ENCODE measurements at regions of chr18 and their contacts with region 1.

Region 1: DNA sequence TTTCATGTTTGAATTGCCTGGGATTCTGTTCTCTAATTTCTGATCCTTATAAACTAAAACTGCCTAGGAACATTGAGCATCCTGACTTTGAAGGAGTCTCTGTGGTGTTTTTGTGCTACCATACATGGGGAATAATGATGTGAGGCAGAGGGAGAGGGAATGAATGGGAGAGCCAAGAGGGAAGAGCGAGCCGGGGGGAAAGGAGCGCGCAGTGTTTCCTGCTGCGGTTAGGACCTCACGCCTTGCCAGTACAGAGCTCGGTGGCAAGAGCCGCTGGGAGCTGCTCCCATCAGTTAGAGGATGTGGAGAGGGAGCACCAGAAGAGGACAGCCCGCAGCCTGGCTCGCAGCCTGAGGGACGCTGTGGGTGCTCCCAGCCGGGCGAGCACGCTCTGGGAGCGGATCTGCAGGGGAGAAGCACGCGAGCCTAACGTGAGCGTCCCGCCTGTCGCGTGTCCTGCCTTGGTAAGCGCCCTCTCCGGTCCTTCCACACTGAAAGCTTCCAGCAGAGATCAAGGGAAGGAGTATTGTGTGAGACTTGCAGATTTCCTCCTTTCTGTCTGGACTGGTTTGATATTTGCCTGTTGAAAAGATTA is 114.7 kb downstream of the FAM210A start:
- DNase-seq: peak; percentile 46
- ATAC-seq: no peak
- H3K4me3 Mint-ChIP-seq: peak overlapping the region; percentile 95
- H3K27ac Mint-ChIP-seq: peak overlapping the region; percentile 99
- H3K4me1 Mint-ChIP-seq: peaks cover 89% of the 10 kb centered on the region
- H3K27me3 Mint-ChIP-seq: no peaks in the 10 kb centered on the region
- CTCF ChIP-seq: no peak

Region 2: DNA sequence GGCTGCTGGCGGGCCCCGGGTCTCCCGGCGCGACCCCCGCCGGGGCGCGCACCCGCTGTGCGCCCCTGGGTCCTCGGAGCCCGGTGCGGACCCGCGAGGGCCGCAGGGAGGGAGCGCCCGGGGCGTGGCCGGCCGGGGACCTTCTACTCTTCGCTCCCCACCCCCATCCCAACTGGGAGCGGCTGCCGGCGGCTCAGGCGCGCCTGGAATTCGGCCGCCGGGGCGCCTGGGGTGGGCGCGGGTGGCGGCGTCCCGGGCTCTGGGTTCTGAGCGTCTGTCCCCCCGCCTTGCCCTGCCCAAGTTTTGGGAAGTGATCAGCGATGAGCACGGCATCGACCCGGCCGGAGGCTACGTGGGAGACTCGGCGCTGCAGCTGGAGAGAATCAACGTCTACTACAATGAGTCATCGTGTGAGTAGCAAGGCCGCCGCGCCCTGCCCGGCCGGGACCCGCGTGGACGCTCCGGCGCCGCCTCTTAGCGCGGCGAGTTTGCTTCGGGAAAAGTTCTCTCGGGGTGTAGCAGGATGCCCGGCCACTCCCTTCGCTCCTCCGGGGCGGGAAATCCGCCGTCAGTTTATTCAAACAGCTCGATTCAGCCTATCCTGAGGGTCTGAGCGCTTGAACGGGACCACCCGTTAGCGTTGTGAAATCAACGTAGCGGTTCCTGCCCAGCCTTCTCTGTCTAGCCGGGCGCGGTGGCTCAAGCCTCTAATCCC is 1303.2 kb before region 1 on chr18:
- CTCF ChIA-PET with region 1: no interaction called
- POLR2A ChIA-PET with region 1: no interaction called
- intact Hi-C with region 1: loop called (anchors 5 kb)
- DNase-seq: peak; percentile 57
- ATAC-seq: peak; percentile 63
- H3K4me3 Mint-ChIP-seq: peak overlapping the region; percentile 85
- H3K27ac Mint-ChIP-seq: peak overlapping the region; percentile 69
- H3K4me1 Mint-ChIP-seq: peaks cover 32% of the 10 kb centered on the region
- H3K27me3 Mint-ChIP-seq: peaks cover 20% of the 10 kb centered on the region
- CTCF ChIP-seq: no peak

Region 3: GRCh38 chr18:13375302-13376255 is 236.1 kb before region 1 on chr18:
- CTCF ChIA-PET with region 1: no interaction called
- POLR2A ChIA-PET with region 1: no interaction called
- intact Hi-C with region 1: loop called (anchors 10 kb)
- DNase-seq: no peak
- ATAC-seq: peak; percentile 92
- H3K4me3 Mint-ChIP-seq: peak overlapping the region; percentile 25
- H3K27ac Mint-ChIP-seq: peak overlapping the region; percentile 65
- H3K4me1 Mint-ChIP-seq: peaks cover 38% of the 10 kb centered on the region
- H3K27me3 Mint-ChIP-seq: no peaks in the 10 kb centered on the region
- CTCF ChIP-seq: no peak

Region 4: GRCh38 chr18:13558124-13558523 is 53.6 kb before region 1 on chr18:
- CTCF ChIA-PET with region 1: interaction called, 171 read pairs
- POLR2A ChIA-PET with region 1: interaction called, 560 read pairs
- intact Hi-C with region 1: loop called (anchors 1 kb)
- DNase-seq: peak; percentile 56
- ATAC-seq: peak; percentile 60
- H3K4me3 Mint-ChIP-seq: peak overlapping the region; percentile 52
- H3K27ac Mint-ChIP-seq: peak overlapping the region; percentile 77
- H3K4me1 Mint-ChIP-seq: peaks cover 46% of the 10 kb centered on the region
- H3K27me3 Mint-ChIP-seq: no peaks in the 10 kb centered on the region
- CTCF ChIP-seq: peak; percentile 51

Region 5: GRCh38 chr18:13585379-13586153 is 26.1 kb before region 1 on chr18:
- CTCF ChIA-PET with region 1: interaction called, 32 read pairs
- POLR2A ChIA-PET with region 1: interaction called, 1,007 read pairs
- intact Hi-C with region 1: loop called (anchors 1 kb)
- DNase-seq: no peak
- ATAC-seq: peak; percentile 80
- H3K4me3 Mint-ChIP-seq: peak overlapping the region; percentile 76
- H3K27ac Mint-ChIP-seq: peak overlapping the region; percentile 98
- H3K4me1 Mint-ChIP-seq: peaks cover 63% of the 10 kb centered on the region
- H3K27me3 Mint-ChIP-seq: no peaks in the 10 kb centered on the region
- CTCF ChIP-seq: no peak

Region 6: GRCh38 chr18:13726232-13726971 is 114.7 kb after region 1 on chr18 and contains the starts of genes FAM210A and RNMT:
- CTCF ChIA-PET with region 1: interaction called, 3 read pairs
- POLR2A ChIA-PET with region 1: interaction called, 17 read pairs
- intact Hi-C with region 1: loop called (anchors 1 kb)
- DNase-seq: peak; percentile 86
- ATAC-seq: peak; percentile 93
- H3K4me3 Mint-ChIP-seq: peak within 1 kb of the TSS; percentile 96
- H3K27ac Mint-ChIP-seq: peak within 1 kb of the TSS; percentile 96
- H3K4me1 Mint-ChIP-seq: peaks cover 46% of the 10 kb centered on the region
- H3K27me3 Mint-ChIP-seq: no peaks in the 10 kb centered on the region
- CTCF ChIP-seq: no peak
- total RNA-seq, gene FAM210A: 12.6 and 13.9 TPM in 2 replicates
- total RNA-seq, gene RNMT: 45.5 and 48.5 TPM in 2 replicates

Measured in activated B cell treated with CpG ODN at 0.5 μM for 24 hours (primary cell).